ENCODE measurements at regions of chr5 and their contacts with region 1.

Region 1: GRCh38 chr5:91024727-91025126 is 358.4 kb downstream of the ARRDC3 start:
- DNase-seq: no peak
- H3K4me3 ChIP-seq: no peak overlapping the region
- H3K27ac ChIP-seq: no peak overlapping the region
- H3K4me1 ChIP-seq: no peaks in the 10 kb centered on the region
- H3K27me3 ChIP-seq: no peaks in the 10 kb centered on the region
- CTCF ChIP-seq: no peak

Region 2: DNA sequence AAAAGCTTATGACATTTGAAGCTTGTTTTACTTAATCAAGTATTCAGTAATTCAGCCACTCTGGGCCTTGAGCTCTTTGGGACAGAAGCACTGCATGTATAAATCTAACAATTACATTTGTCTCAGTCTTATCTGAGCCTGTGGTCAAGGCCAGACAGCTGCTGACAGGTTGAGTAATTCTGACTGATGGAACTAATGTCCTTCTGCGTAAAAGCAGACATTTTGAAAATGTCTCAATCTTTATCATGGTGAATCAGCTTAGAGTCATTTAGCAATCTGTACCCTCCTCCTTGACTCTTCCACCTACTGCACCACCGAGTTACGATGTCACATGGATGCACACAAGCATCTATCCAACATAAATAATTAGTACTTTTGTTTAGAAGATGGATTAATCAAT is 41.6 kb before region 1 on chr5:
- CTCF ChIA-PET with region 1: no interaction called
- dilution Hi-C with region 1: no loop called
- in situ Hi-C with region 1: no loop called
- intact Hi-C with region 1: loop called (anchors 10 kb)
- DNase-seq: peak; percentile 69
- H3K4me3 ChIP-seq: no peak overlapping the region
- H3K27ac ChIP-seq: no peak overlapping the region
- H3K4me1 ChIP-seq: no peaks in the 10 kb centered on the region
- H3K27me3 ChIP-seq: no peaks in the 10 kb centered on the region
- CTCF ChIP-seq: no peak

Region 3: DNA sequence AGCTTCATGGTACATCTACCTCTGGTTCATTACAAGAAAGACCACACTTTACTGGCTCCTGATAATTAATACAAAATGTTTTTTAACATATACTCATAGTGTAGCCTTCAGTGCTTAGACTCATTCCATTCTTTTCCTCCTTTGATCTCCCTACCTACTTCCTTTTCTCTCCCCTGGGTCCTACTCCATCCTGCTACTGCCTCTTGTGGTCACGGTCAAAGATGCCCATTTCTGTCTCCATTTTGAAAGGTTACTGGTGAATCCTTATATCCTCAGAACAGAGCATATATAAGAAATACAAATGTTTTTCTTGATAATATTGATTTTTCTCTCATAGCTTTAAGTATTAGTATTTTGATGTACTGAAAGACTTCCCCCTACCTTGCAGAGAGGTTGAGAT is 17.5 kb before region 1 on chr5:
- CTCF ChIA-PET with region 1: no interaction called
- dilution Hi-C with region 1: no loop called
- in situ Hi-C with region 1: no loop called
- intact Hi-C with region 1: no loop called
- DNase-seq: no peak
- H3K4me3 ChIP-seq: no peak overlapping the region
- H3K27ac ChIP-seq: no peak overlapping the region
- H3K4me1 ChIP-seq: no peaks in the 10 kb centered on the region
- H3K27me3 ChIP-seq: no peaks in the 10 kb centered on the region
- CTCF ChIP-seq: no peak